Cardiac septum (tissue), 1 donor: ENCODE measurements at regions of chr15 and their contacts with region 1.

Region 1: DNA sequence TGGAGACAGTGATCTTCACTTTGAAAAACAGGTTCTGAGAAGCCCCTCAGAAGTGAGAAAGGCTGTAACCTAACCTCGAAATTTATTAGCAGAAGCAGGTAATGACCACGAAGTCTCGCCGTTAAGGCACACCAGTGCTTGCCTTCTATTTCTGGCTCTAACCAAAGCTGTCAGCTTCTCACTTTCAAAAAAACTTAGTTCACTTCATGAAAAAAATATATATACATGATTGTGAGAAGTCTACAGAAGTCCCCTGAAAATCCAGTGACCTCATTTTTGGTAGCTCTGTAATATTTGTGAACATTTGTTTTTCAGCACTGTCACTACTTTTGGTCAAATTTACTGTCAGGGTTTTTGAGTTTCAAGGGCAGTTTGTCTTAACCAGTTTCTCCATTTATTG is 19.1 kb upstream of the AKAP13 start:
- DNase-seq: no peak

Region 2: GRCh38 chr15:85337425-85338074 is 23.8 kb before region 1 on chr15:
- intact Hi-C with region 1: loop called (anchors 2 kb)
- DNase-seq: peak; percentile 78

Region 3: GRCh38 chr15:85518979-85519761 is 157.8 kb after region 1 on chr15:
- intact Hi-C with region 1: no loop called
- DNase-seq: no peak

Region 4: GRCh38 chr15:85543741-85544155 is 182.4 kb after region 1 on chr15:
- intact Hi-C with region 1: no loop called
- DNase-seq: peak; percentile 91